ENCODE measurements at regions of chr2 and their contacts with region 1.

Region 1: DNA sequence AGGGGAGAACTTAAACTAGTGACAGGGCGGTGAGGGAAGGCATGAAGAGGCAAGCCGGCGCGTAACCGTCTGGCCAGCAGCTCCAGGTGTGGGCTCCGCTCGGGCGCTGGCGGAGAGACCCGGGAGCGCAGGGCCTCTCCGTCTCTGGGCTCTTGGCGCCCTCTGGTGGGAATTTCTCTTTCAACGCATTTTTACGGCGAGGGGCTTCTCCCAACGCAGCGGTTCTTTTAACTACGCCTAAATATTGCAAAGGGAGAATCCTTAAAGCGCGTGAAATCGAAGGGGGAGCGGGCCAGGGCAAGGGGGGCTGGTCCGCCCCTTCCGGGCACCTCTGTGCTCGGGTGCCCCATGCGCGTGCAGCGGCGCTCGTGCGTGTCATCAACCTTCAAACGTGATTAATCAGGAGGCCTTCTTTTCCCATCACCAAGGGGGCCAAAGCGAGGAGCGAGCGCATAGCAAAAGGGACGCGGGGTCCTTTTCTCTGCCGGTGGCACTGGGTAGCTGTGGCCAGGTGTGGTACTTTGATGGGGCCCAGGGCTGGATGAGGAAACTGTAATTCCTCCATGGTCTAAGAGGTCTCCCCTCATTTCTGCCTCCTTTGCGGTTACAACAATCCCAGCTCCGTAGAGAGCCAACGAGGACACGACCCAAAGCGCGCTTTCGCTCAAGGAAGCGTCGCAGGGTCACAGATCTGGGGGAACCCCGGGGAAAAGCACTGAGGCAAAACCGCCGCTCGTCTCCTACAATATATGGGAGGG is 762 bp upstream of the GAD1 start:
- DNase-seq: peak; percentile 68
- ATAC-seq: peak; percentile 82
- H3K4me3 ChIP-seq: peak overlapping the region; percentile 32 to 74 (median 45); a peak in 5 of 6 replicates
- H3K27ac ChIP-seq: no peak overlapping the region
- H3K4me1 ChIP-seq: peaks cover 27% of the 10 kb centered on the region
- H3K27me3 ChIP-seq: peaks cover 23 to 72% of the 10 kb centered on the region in 2 experiments
- CTCF ChIP-seq: peak; percentile 91
- EP300 ChIP-seq: no peak
- POLR2A ChIP-seq: no peak
- RAD21 ChIP-seq: peak; percentile 98

Region 2: GRCh38 chr2:170324640-170325046 is 491.3 kb before region 1 on chr2:
- CTCF ChIA-PET with region 1: interaction called, 6 read pairs
- POLR2A ChIA-PET with region 1: no interaction called
- in situ Hi-C with region 1: no loop called
- intact Hi-C with region 1: loop called (anchors 1 kb)
- DNase-seq: peak; percentile 51
- ATAC-seq: peak; percentile 81
- H3K4me3 ChIP-seq: no peak overlapping the region
- H3K27ac ChIP-seq: no peak overlapping the region
- H3K4me1 ChIP-seq: no peaks in the 10 kb centered on the region
- H3K27me3 ChIP-seq: no peaks in the 10 kb centered on the region
- CTCF ChIP-seq: peak; percentile 90
- EP300 ChIP-seq: no peak
- POLR2A ChIP-seq: no peak
- RAD21 ChIP-seq: peak; percentile 76

Region 3: DNA sequence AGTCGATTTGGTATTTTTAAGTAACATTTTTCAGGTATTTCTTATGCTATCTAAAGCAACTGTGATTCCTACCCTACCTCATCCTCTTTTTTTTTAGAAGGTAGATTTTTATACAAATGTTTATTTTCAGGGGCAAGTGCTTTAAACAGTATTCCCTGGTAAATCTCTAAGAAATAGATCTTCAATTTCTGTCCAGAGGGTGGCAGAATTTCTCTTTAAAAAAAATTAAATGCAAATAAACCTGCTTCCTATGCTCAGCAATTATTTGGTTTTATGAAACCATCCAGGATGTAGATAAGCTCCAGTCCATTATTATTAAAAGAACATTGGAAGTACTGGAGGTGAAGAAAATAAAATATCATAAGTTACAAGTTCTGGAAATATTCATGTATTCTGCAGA is 446.0 kb before region 1 on chr2:
- CTCF ChIA-PET with region 1: interaction called, 29 read pairs
- POLR2A ChIA-PET with region 1: no interaction called
- in situ Hi-C with region 1: loop called (anchors 5 kb)
- intact Hi-C with region 1: loop called (anchors 1 kb)
- DNase-seq: peak; percentile 40
- ATAC-seq: no peak
- H3K4me3 ChIP-seq: no peak overlapping the region
- H3K27ac ChIP-seq: no peak overlapping the region
- H3K4me1 ChIP-seq: no peaks in the 10 kb centered on the region
- H3K27me3 ChIP-seq: peaks cover 0 to 48% of the 10 kb centered on the region in 2 experiments; a peak in 3 of 5 replicates
- CTCF ChIP-seq: peak; percentile 34
- EP300 ChIP-seq: no peak
- POLR2A ChIP-seq: no peak
- RAD21 ChIP-seq: no peak; the same call in 1 of the 2 replicates

Region 4: GRCh38 chr2:170409164-170409535 is 406.8 kb before region 1 on chr2:
- CTCF ChIA-PET with region 1: interaction called, 20 read pairs
- POLR2A ChIA-PET with region 1: no interaction called
- in situ Hi-C with region 1: no loop called
- intact Hi-C with region 1: loop called (anchors 1 kb)
- DNase-seq: peak; percentile 71
- ATAC-seq: peak; percentile 84
- H3K4me3 ChIP-seq: peak overlapping the region in 1 of 3 experiments; percentile 11; a peak in 1 of 6 replicates
- H3K27ac ChIP-seq: no peak overlapping the region
- H3K4me1 ChIP-seq: peaks cover 12% of the 10 kb centered on the region
- H3K27me3 ChIP-seq: peaks cover 2 to 53% of the 10 kb centered on the region in 2 experiments; a peak in 4 of 5 replicates
- CTCF ChIP-seq: peak; percentile 88
- EP300 ChIP-seq: no peak
- POLR2A ChIP-seq: no peak
- RAD21 ChIP-seq: peak; percentile 85

Region 5: GRCh38 chr2:170715062-170715931 is 100.6 kb before region 1 on chr2 and contains the start of gene SP5:
- CTCF ChIA-PET with region 1: interaction called, 5 read pairs
- POLR2A ChIA-PET with region 1: no interaction called
- in situ Hi-C with region 1: loop called (anchors 5 kb)
- intact Hi-C with region 1: loop called (anchors 1 kb)
- DNase-seq: peak; percentile 100
- ATAC-seq: peak; percentile 72
- H3K4me3 ChIP-seq: peak within 1 kb of the TSS; percentile 95 to 99 (median 99)
- H3K27ac ChIP-seq: peak within 1 kb of the TSS; percentile 100
- H3K4me1 ChIP-seq: peaks cover 31% of the 10 kb centered on the region
- H3K27me3 ChIP-seq: no peaks in the 10 kb centered on the region; a peak in 1 of 5 replicates
- CTCF ChIP-seq: no peak
- EP300 ChIP-seq: peak; percentile 82 to 97
- POLR2A ChIP-seq: peak in 1 of 2 experiments; percentile 91; a peak in 2 of 4 replicates
- RAD21 ChIP-seq: peak; percentile 35; the same call in 1 of the 2 replicates
- total RNA-seq, gene SP5: 86.9 and 119 TPM in 2 replicates

Measured in HepG2 (cell line).